Activated CD4-positive, alpha-beta T cell treated with anti-CD3 and anti-CD28 coated beads for 36 hours (primary cell): ENCODE measurements at regions of chr17 and their contacts with region 1.

Region 1: DNA sequence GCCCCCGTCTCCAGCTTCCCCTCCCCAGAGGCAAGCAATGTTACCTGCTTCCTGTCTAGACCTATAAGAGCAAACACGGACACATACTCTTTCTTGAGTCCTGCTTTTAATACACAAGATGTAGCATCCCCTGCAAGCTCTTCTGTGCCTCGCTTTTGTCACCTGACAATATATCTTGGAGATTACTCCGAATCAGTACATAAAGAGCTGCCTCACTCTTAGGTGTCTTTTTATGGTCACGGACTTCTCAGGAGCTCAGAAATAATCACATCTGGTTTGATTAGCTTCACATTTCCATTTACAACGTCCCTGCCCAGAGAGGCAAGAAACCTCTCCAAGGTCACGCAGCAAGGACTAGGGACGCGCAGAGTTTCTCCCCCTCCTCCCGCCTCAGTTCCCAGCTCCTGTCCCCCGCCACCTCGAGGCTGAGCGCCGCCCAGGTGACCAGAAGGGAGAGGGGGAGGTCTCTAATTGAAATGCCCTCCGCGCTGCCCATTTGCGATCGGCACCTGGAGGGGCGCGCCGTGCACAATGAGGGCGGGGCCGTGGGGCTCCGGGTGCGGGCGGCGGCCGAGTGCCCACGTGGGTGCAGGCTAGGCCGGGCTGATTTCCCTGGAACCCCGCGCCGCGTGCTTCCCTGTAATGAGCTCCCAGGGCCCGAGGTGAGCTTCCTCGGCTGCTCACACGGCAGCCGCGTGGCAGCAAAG is 13.8 kb upstream of the SEZ6 start:
- DNase-seq: no peak
- ATAC-seq: no peak
- H3K4me3 Mint-ChIP-seq: no peak overlapping the region
- H3K27ac Mint-ChIP-seq: no peak overlapping the region
- H3K4me1 Mint-ChIP-seq: peaks cover 2% of the 10 kb centered on the region
- H3K27me3 Mint-ChIP-seq: peaks cover 34% of the 10 kb centered on the region

Region 2: DNA sequence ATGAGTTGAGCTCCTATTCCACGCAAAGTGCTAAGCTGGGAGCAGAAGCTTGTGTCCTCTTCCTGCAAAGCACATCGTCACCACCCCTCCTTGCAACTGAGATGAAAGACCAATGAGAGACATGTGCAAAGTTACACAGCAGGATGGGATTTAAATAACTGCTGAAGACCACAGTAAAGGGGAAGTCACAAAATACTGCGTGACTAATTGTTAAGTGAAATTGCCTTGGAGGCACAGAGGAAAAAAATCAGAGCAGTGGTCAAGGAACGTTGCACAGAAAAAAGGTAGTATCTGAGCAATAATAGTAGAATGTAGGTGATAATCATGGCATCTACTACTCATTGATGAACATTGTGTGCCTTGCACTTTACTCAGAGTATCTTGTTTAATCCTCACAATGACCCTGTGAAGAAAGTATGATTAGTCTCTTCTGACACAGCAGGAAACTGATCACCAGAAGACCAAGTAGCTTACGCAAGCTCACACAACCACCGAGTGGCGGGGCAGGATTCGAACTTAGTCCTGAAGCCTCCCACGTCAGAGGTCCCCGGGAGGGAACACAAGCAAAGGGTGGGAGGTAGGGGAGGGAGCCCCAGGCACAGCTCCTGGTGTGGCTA is 175.9 kb after region 1 on chr17:
- CTCF ChIA-PET with region 1: no interaction called
- POLR2A ChIA-PET with region 1: no interaction called
- intact Hi-C with region 1: loop called in 1 of 2 experiments (anchors 10 kb)
- DNase-seq: no peak
- ATAC-seq: peak; percentile 39
- H3K4me3 Mint-ChIP-seq: no peak overlapping the region
- H3K27ac Mint-ChIP-seq: no peak overlapping the region
- H3K4me1 Mint-ChIP-seq: peaks cover 2% of the 10 kb centered on the region
- H3K27me3 Mint-ChIP-seq: peaks cover 8% of the 10 kb centered on the region

Region 3: DNA sequence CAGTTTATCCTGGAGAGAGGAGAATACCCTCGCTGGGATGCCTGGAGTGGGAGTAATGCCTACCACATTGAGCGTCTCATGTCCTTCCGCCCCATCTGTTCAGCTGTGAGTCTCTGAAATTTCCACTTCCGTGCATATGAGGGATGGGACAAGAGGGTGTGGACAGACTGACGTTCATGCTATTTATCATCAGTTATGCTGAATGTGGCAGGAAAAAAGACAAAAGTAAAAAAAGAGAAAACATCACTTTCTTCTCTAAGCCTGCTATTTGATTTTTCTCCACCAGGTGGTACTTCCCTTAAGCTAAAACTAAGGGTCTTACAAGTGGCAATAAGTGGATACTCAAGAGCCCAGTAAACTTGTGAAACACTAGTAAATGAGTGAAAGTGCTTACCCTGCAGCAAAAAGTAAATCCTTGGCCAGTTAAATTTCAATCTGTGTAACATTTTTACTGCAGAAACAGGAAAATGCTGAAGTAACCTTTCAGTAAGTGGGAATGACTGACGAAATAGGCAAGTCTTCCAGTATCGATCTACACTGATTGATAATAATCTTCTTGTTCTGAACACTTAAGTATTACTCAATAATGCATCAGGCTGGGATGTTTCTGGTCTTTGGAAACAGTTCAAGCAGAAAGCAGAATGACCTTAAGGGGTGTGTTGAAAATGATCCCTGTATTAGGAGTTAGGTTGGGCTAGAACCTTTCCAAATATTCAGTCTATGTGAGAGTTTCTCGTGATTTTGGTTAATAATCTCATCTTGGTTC is 232.7 kb after region 1 on chr17:
- CTCF ChIA-PET with region 1: no interaction called
- POLR2A ChIA-PET with region 1: no interaction called
- intact Hi-C with region 1: no loop called
- DNase-seq: no peak
- ATAC-seq: no peak
- H3K4me3 Mint-ChIP-seq: no peak overlapping the region
- H3K27ac Mint-ChIP-seq: no peak overlapping the region
- H3K4me1 Mint-ChIP-seq: peaks cover 12% of the 10 kb centered on the region
- H3K27me3 Mint-ChIP-seq: no peaks in the 10 kb centered on the region